Sciatic nerve (tissue), 2 donors: ENCODE measurements at regions of chr16 and their contacts with region 1.

Region 1: GRCh38 chr16:11797166-11797956 is at the start of gene ZC3H7A:
- DNase-seq: peak; percentile 97
- ATAC-seq: peak; percentile 99
- total RNA-seq, gene ZC3H7A: 91.1 TPM

Region 2: GRCh38 chr16:11742539-11743307 is 54.6 kb before region 1 on chr16 and contains the start of gene TXNDC11:
- intact Hi-C with region 1: loop called (anchors 10 kb)
- DNase-seq: peak; percentile 100
- ATAC-seq: peak; percentile 99
- total RNA-seq, gene TXNDC11: 36.6 TPM